ENCODE measurements at regions of chr14 and their contacts with region 1.

Region 1: DNA sequence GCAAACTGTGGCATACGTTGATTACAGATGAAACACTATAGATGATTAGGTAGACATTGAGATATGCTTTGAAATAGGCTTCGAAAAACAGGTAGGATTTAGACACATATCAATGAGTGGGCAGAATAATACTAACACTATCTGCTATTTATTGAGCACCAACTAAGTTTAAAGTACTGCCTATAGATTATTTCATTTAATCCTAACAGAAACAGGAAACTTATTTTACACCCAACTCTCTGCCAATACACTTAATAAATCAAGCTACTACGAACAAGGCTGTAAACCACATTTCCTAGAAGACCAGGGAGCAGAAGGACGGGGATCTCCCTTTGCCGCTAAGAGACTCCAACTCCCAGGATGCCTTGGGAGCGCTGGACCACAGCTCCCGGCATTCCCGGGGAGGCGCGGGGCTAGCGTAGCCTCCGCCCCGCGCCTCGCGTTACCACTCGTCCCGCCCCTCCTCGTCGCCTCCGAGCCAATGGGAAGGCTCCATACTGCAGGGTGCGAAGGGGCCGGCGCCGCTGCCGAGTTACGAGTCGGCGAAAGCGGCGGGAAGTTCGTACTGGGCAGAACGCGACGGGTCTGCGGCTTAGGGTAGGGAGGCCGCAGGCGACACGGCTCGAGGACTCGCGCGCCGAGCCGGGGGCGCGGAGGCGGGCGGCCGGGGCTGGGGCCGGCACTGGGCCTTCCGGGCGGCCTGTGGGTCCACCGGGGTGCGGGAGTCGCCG is at the start of gene VRK1:
- DNase-seq: peak; percentile 95
- H3K4me3 Mint-ChIP-seq: peak within 1 kb of the TSS; percentile 95
- H3K27ac Mint-ChIP-seq: peak within 1 kb of the TSS; percentile 86
- H3K4me1 Mint-ChIP-seq: peaks cover 29% of the 10 kb centered on the region
- H3K27me3 Mint-ChIP-seq: peaks cover 8% of the 10 kb centered on the region
- total RNA-seq, gene VRK1: 62.0 to 64.1 TPM

Region 2: GRCh38 chr14:96748362-96748761 is 48.7 kb before region 1 on chr14:
- CTCF ChIA-PET with region 1: no interaction called
- POLR2A ChIA-PET with region 1: no interaction called
- DNase-seq: no peak
- H3K4me3 Mint-ChIP-seq: no peak overlapping the region
- H3K27ac Mint-ChIP-seq: no peak overlapping the region
- H3K4me1 Mint-ChIP-seq: no peaks in the 10 kb centered on the region
- H3K27me3 Mint-ChIP-seq: peaks cover 17% of the 10 kb centered on the region

Region 3: DNA sequence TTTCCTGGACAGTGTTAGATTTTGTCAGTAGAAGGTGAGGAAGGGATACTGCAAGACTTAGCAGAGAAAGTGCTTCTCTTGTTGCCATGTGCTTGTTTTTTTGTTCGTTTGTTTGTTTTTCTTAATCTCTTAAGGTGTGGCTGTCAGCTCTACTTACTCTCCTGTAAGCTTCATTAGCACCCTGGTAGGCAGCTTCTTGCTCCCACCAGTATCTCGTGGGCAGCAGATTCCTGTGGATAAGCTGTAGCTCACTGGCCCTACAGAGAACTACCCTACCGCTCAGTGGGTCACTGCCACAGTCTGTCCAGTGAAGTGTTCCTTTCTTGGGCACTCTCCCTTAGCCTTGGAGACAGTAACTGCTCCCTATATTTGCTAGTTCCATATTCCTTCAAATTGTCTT is 30.3 kb after region 1 on chr14:
- CTCF ChIA-PET with region 1: no interaction called
- POLR2A ChIA-PET with region 1: interaction called, 11 read pairs
- DNase-seq: no peak
- H3K4me3 Mint-ChIP-seq: no peak overlapping the region
- H3K27ac Mint-ChIP-seq: no peak overlapping the region
- H3K4me1 Mint-ChIP-seq: peaks cover 15% of the 10 kb centered on the region
- H3K27me3 Mint-ChIP-seq: no peaks in the 10 kb centered on the region

Region 4: GRCh38 chr14:96852823-96853422 is 55.9 kb after region 1 on chr14:
- CTCF ChIA-PET with region 1: interaction called, 9 read pairs
- POLR2A ChIA-PET with region 1: interaction called, 24 read pairs
- DNase-seq: no peak
- H3K4me3 Mint-ChIP-seq: no peak overlapping the region
- H3K27ac Mint-ChIP-seq: no peak overlapping the region
- H3K4me1 Mint-ChIP-seq: peaks cover 17% of the 10 kb centered on the region
- H3K27me3 Mint-ChIP-seq: no peaks in the 10 kb centered on the region

Measured in activated CD4-positive, alpha-beta memory T cell treated with anti-CD3 and anti-CD28 coated beads, Interleukin-2, amount 10 ng/mL, durations not matched to agents 7 days and 5 days (primary cell).